Calu3 (cell line): ENCODE measurements at regions of chr22 and their contacts with region 1.

Region 1: GRCh38 chr22:38051900-38052862 is 5.0 kb upstream of the PICK1 start:
- DNase-seq: peak; percentile 85
- H3K4me3 Mint-ChIP-seq: no peak overlapping the region
- H3K27ac Mint-ChIP-seq: no peak overlapping the region
- H3K4me1 Mint-ChIP-seq: peaks cover 11% of the 10 kb centered on the region
- H3K27me3 Mint-ChIP-seq: peaks cover 8% of the 10 kb centered on the region
- CTCF ChIP-seq: peak; percentile 92

Region 2: GRCh38 chr22:38034274-38034882 is 17.8 kb before region 1 on chr22:
- CTCF ChIA-PET with region 1: interaction called, 12 read pairs
- intact Hi-C with region 1: no loop called
- DNase-seq: peak; percentile 88
- H3K4me3 Mint-ChIP-seq: peak overlapping the region; percentile 1
- H3K27ac Mint-ChIP-seq: peak overlapping the region; percentile 64
- H3K4me1 Mint-ChIP-seq: peaks cover 18% of the 10 kb centered on the region
- H3K27me3 Mint-ChIP-seq: peaks cover 7% of the 10 kb centered on the region
- CTCF ChIP-seq: no peak

Region 3: DNA sequence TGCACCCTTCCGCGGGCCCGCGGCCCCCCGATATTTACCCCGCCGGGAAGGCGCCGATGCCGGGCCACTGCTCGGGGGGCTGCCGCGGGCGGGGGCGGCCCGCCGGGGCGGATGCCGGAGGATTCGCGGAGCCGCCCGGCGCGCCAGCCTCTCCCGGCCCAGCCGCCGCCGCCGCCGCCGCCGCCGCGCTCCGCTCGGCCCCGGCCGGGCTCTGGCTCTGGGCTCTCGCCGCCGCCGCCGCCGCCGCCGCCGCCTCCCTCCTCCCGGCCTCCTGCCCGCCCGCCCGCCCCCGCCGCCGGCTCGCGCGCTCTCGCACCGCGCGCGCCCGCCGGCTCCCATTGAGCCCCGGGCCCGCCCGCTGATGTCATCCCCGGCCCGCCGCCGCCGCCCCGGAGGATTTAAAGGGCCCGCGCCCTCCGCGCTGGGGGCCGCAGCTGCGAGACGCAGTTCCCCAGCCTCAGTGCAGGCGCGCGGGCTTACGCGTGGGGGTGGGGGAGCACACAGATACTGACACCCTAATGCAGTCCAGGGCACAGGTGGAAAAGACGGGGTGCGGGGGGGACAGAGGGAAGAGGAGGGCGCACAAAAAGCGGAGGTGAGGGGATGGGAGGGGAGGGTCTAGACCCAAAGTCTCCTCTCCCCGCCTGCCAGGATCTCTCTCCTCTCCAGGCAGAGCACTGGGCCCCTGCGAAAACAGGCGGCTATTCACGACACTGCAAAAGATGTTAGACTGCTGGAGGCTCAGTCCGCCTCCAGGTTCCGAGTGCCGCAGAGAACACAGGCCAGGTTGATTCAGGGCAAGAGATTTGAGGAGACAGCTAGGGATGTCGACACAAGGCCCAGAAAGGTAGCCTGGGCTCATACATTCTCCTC is 265.2 kb after region 1 on chr22 and contains the start of gene CSNK1E:
- CTCF ChIA-PET with region 1: no interaction called
- intact Hi-C with region 1: loop called (anchors 10 kb)
- DNase-seq: peak; percentile 80
- H3K4me3 Mint-ChIP-seq: peak within 1 kb of the TSS; percentile 91
- H3K27ac Mint-ChIP-seq: peak within 1 kb of the TSS; percentile 94
- H3K4me1 Mint-ChIP-seq: peaks cover 34% of the 10 kb centered on the region
- H3K27me3 Mint-ChIP-seq: no peaks in the 10 kb centered on the region
- CTCF ChIP-seq: no peak
- total RNA-seq, gene CSNK1E: 172 and 178 TPM in 2 replicates

Region 4: GRCh38 chr22:38353142-38353629 is 301.0 kb after region 1 on chr22:
- CTCF ChIA-PET with region 1: interaction called, 5 read pairs
- intact Hi-C with region 1: loop called (anchors 5 kb)
- DNase-seq: peak; percentile 81
- H3K4me3 Mint-ChIP-seq: no peak overlapping the region
- H3K27ac Mint-ChIP-seq: no peak overlapping the region
- H3K4me1 Mint-ChIP-seq: no peaks in the 10 kb centered on the region
- H3K27me3 Mint-ChIP-seq: no peaks in the 10 kb centered on the region
- CTCF ChIP-seq: peak; percentile 92

Region 5: DNA sequence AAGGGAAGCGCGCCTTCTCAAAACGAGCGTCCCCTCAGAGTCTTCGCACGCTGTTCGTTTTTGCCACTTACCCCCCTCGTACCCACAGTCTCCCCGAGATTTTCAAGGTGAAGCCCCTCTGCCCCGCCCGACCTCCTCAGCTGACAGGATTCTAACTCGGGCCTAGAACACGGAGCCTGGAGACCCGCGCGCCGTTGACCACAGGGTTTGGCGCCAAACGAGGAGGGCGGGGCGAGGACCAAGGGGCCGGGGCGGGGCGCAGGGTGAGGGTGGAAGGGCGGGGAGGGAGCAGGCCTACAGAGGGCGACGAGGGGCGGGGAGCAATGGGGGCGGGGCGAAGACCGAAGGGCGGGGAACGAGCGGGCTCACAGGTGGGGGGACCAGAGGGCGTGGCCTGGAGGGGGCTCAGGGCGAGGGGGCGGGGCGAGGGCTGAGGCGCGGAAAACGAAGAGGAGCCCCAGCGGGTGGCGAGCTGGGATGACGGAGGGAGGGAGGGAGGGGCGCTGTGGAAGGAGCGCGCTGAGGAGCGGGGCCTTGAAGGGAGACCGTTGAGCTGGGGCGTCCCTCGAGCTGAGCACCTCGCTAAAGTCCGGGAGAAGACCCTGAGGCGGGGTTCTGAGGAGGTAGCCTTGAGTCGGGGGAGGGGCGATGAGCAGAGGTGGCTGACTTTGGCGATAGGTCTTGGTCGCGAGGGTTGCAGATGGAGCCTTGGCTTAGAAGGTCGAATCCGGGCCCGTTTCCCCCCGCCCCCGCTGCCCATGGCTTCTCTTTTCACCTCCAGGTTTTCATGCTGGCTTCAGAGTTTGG is 518.0 kb after region 1 on chr22 and contains the start of gene DMC1:
- CTCF ChIA-PET with region 1: interaction called, 9 read pairs
- intact Hi-C with region 1: loop called (anchors 5 kb)
- DNase-seq: peak; percentile 93
- H3K4me3 Mint-ChIP-seq: peak within 1 kb of the TSS; percentile 94
- H3K27ac Mint-ChIP-seq: peak within 1 kb of the TSS; percentile 74
- H3K4me1 Mint-ChIP-seq: peaks cover 37% of the 10 kb centered on the region
- H3K27me3 Mint-ChIP-seq: no peaks in the 10 kb centered on the region
- CTCF ChIP-seq: no peak
- total RNA-seq, gene DMC1: 4.1 and 4.4 TPM in 2 replicates